ENCODE measurements at regions of chr7 and their contacts with region 1.

Region 1: GRCh38 chr7:26705567-26705966 is 158.8 kb downstream of the SKAP2 start:
- DNase-seq: peak; percentile 92
- H3K4me3 Mint-ChIP-seq: no peak overlapping the region
- H3K27ac Mint-ChIP-seq: peak overlapping the region; percentile 71
- H3K4me1 Mint-ChIP-seq: peaks cover 16% of the 10 kb centered on the region
- H3K27me3 Mint-ChIP-seq: no peaks in the 10 kb centered on the region
- CTCF ChIP-seq: no peak

Region 2: DNA sequence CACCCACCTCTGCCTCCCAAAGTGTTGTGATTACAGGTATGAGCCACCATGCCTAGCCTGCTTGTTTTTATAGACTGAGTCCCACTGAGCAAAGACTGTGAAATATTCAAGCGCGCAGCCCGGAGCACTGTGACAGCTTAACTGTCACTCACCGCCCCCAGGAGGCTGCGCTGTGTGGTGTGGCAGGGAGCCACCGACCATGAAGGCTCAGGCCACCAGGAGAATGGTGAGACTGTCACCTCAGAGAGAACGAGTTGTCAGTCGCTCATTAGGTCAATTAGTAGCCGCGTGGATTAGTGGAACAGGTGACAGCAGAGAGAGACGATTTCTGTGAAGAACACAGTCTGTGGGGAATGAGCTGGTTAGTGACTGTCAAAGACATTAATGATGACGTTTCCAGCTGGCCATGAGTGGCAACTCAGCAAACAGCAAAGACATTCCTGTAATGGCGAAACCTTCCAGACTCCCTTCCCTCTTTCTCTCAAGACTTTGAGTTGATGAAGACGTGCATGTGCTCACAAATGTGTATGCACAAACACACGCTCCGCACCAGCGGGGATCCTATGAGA is 1645.0 kb before region 1 on chr7:
- CTCF ChIA-PET with region 1: no interaction called
- POLR2A ChIA-PET with region 1: no interaction called
- intact Hi-C with region 1: no loop called
- DNase-seq: no peak
- H3K4me3 Mint-ChIP-seq: no peak overlapping the region
- H3K27ac Mint-ChIP-seq: no peak overlapping the region
- H3K4me1 Mint-ChIP-seq: no peaks in the 10 kb centered on the region
- H3K27me3 Mint-ChIP-seq: no peaks in the 10 kb centered on the region
- CTCF ChIP-seq: no peak

Region 3: GRCh38 chr7:26562841-26563240 is 142.7 kb before region 1 on chr7:
- CTCF ChIA-PET with region 1: no interaction called
- POLR2A ChIA-PET with region 1: no interaction called
- intact Hi-C with region 1: no loop called
- DNase-seq: no peak
- H3K4me3 Mint-ChIP-seq: no peak overlapping the region
- H3K27ac Mint-ChIP-seq: no peak overlapping the region
- H3K4me1 Mint-ChIP-seq: no peaks in the 10 kb centered on the region
- H3K27me3 Mint-ChIP-seq: no peaks in the 10 kb centered on the region
- CTCF ChIP-seq: peak; percentile 7

Region 4: GRCh38 chr7:26694141-26694540 is 11.4 kb before region 1 on chr7:
- CTCF ChIA-PET with region 1: interaction called, 4 read pairs
- POLR2A ChIA-PET with region 1: interaction called, 13 read pairs
- intact Hi-C with region 1: no loop called
- DNase-seq: no peak
- H3K4me3 Mint-ChIP-seq: no peak overlapping the region
- H3K27ac Mint-ChIP-seq: no peak overlapping the region
- H3K4me1 Mint-ChIP-seq: peaks cover 12% of the 10 kb centered on the region
- H3K27me3 Mint-ChIP-seq: no peaks in the 10 kb centered on the region
- CTCF ChIP-seq: no peak